ENCODE measurements at regions of chr11 and their contacts with region 1.

Region 1: GRCh38 chr11:36702330-36703055 is 104.5 kb upstream of the RAG2 start:
- DNase-seq: peak; percentile 57
- CTCF ChIP-seq: peak; percentile 77

Region 2: DNA sequence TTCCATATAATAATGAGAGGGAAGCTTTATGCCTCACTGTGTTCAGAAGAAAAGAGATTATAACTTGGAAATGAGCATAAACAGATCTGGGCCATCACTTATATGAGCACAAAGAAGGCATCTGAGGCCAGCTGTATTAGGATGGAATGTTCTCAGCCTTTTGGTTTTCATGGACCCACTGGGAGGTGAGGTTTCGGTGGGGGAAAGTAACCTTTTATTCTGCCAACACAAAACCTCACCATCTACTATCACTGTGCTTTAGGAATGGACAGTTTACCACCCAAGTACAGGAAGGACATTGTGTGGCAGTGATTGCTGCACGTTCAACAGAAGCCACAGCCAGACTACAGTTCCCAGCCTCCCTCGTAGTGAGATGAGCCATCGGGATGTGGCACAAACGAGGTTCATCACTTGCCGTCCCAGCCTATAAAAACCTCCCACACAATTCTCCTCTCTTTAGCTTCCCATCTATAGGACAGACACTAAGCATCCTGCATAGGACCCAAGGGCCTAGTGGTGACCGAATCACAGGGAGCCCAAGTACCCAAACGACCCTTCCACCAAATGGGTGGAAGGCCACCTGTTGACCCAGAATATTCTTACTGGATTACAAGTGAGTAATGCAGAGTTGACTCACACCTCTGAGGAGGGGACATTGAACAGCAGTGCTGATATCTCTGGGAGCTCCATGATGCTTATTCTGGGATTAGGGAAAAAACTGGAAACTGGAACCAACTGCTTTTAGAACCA is 17.0 kb after region 1 on chr11:
- CTCF ChIA-PET with region 1: interaction called, 11 read pairs
- POLR2A ChIA-PET with region 1: no interaction called
- DNase-seq: no peak
- CTCF ChIP-seq: no peak

Measured in GM10248 (cell line).